Motor neuron (in vitro differentiated cells): ENCODE measurements at regions of chr1 and their contacts with region 1.

Region 1: GRCh38 chr1:18597160-18598042 is 33.2 kb upstream of the PAX7 start:
- ATAC-seq: peak; percentile 82 to 97 (median 88)
- H3K4me3 ChIP-seq: no peak overlapping the region
- H3K27ac ChIP-seq: no peak overlapping the region
- H3K4me1 ChIP-seq: peaks cover 9 to 10% of the 10 kb centered on the region in 2 donors

Region 2: GRCh38 chr1:17119076-17119772 is 1478.2 kb before region 1 on chr1 and contains the start of gene PADI2:
- in situ Hi-C with region 1: loop called in 1 of 9 experiments (anchors 25 kb)
- ATAC-seq: peak; percentile 87 to 99 (median 91)
- H3K4me3 ChIP-seq: peak within 1 kb of the TSS; percentile 27 to 48 (median 34)
- H3K27ac ChIP-seq: peak within 1 kb of the TSS in 1 of 2 donors; percentile 0
- H3K4me1 ChIP-seq: peaks cover 23 to 25% of the 10 kb centered on the region in 2 donors
- total RNA-seq, gene PADI2: 0.92 to 5.3 (median 2.0) TPM

Region 3: GRCh38 chr1:17624611-17625233 is 972.7 kb before region 1 on chr1:
- in situ Hi-C with region 1: loop called in 2 of 9 experiments (anchors 25 kb)
- ATAC-seq: peak in 3 of 8 experiments; percentile 3 to 77 (median 30)
- H3K4me3 ChIP-seq: no peak overlapping the region
- H3K27ac ChIP-seq: no peak overlapping the region
- H3K4me1 ChIP-seq: no peaks in the 10 kb centered on the region

Region 4: GRCh38 chr1:18681423-18681835 is 84.0 kb after region 1 on chr1:
- in situ Hi-C with region 1: loop called in 1 of 9 experiments (anchors 10 kb)
- ATAC-seq: peak; percentile 53 to 86 (median 76)
- H3K4me3 ChIP-seq: no peak overlapping the region
- H3K27ac ChIP-seq: no peak overlapping the region
- H3K4me1 ChIP-seq: peaks cover 5 to 11% of the 10 kb centered on the region in 2 donors

Region 5: DNA sequence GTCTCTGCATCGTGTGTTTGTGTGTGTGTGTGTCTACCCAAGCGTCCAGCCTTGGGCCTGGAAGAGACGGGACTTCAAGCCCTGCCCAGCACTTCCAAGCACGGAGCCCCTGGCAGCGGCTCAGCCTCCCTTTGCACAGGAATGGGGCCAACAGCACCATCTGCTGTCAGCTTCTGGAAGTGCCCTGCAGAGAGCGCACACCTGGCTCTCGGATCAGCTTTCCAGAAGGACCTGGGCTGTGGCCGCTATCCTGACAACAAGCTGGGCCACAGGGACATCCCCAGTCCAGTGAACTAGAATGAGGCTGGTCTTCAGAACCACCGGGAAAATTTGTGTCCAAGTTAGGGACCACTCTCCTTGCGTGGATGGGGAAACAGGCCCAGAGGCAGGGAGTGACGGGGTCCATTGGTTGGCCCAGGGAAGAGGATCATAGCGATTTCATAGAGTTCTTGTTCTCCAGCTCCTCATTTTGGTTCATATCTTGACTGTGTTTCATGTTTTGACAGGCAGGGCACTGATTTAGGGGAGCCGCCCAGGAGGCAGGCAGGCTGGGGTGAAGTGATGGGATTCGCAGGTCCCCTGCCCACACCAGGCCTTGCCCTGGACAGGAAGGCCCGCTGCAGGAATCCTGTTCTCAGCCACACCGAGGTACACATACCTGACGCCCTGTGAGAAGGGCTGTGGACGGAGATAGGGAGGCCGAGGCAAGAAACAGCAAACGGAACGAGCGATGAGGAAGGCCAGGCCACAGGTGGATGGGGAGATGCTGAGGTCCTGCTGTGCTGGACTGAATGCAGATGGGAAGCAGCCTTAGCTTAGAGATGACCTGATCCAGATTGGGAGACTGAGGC is 223.6 kb after region 1 on chr1:
- in situ Hi-C with region 1: loop called (anchors 5 to 25 kb)
- ATAC-seq: peak; percentile 77 to 96 (median 90)
- H3K4me3 ChIP-seq: no peak overlapping the region
- H3K27ac ChIP-seq: no peak overlapping the region
- H3K4me1 ChIP-seq: peaks cover 0 to 13% of the 10 kb centered on the region in 2 donors

Region 6: GRCh38 chr1:19892628-19893168 is 1295.3 kb after region 1 on chr1:
- in situ Hi-C with region 1: no loop called
- ATAC-seq: peak in 1 of 8 experiments; percentile 39
- H3K4me3 ChIP-seq: no peak overlapping the region
- H3K27ac ChIP-seq: no peak overlapping the region
- H3K4me1 ChIP-seq: peaks cover 0 to 15% of the 10 kb centered on the region in 2 donors